Calu3 (cell line): ENCODE measurements at regions of chr18 and their contacts with region 1.

Region 1: GRCh38 chr18:62714671-62715435 is 488 bp upstream of the PHLPP1 start:
- DNase-seq: peak; percentile 99
- H3K4me3 Mint-ChIP-seq: peak overlapping the region; percentile 80
- H3K27ac Mint-ChIP-seq: peak overlapping the region; percentile 93
- H3K4me1 Mint-ChIP-seq: no peaks in the 10 kb centered on the region
- H3K27me3 Mint-ChIP-seq: no peaks in the 10 kb centered on the region
- CTCF ChIP-seq: peak; percentile 60

Region 2: DNA sequence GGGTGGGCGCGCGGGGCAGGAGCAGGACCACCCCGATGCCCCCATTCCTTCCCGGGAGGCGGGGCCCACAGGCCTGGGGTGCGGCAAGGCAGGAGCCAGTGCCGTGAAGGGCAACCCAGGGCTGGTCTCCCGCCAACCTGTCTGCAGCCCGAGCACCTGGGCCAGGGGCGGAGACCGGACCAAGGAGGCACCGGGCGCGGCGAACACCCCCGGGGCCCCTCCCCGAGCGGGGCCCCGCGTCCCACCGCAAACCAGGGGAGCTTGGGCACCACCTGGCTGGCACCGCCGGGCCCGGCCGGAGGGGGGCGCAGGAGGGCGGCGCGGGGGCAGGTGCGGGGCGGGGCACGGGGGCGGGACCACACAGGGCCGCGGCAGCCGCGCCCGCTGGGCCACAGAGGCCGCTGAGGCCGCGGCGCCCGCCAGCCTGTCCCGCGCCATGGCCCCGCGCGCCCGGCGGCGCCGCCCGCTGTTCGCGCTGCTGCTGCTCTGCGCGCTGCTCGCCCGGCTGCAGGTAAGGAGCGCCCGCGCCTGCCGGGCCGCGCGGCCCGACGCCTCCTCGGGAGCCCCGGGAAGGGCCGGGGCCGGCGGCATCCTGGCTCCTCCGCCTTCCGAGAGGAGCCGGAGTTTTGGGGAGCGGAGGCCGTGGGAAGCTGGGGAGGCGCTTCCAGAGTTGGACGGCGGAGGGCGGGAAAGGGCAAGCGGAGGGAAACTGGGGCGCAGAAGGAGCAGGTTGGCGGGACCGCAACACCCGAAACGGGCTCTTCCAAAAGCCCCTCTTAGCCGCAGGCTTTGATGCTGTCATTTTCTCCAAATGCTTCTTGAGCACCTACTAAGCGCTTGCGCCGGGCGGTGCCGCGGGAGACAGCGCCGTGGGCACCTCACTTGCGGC is 389.7 kb before region 1 on chr18 and contains the start of gene TNFRSF11A:
- CTCF ChIA-PET with region 1: interaction called, 4 read pairs
- intact Hi-C with region 1: loop called (anchors 5 kb)
- DNase-seq: peak; percentile 88
- H3K4me3 Mint-ChIP-seq: peak within 1 kb of the TSS; percentile 90
- H3K27ac Mint-ChIP-seq: peak within 1 kb of the TSS; percentile 79
- H3K4me1 Mint-ChIP-seq: peaks cover 62% of the 10 kb centered on the region
- H3K27me3 Mint-ChIP-seq: no peaks in the 10 kb centered on the region
- CTCF ChIP-seq: peak; percentile 54
- total RNA-seq, gene TNFRSF11A: 94.6 and 126 TPM in 2 replicates

Region 3: GRCh38 chr18:62651276-62652056 is 63.4 kb before region 1 on chr18:
- CTCF ChIA-PET with region 1: no interaction called
- intact Hi-C with region 1: no loop called
- DNase-seq: no peak
- H3K4me3 Mint-ChIP-seq: no peak overlapping the region
- H3K27ac Mint-ChIP-seq: no peak overlapping the region
- H3K4me1 Mint-ChIP-seq: no peaks in the 10 kb centered on the region
- H3K27me3 Mint-ChIP-seq: no peaks in the 10 kb centered on the region
- CTCF ChIP-seq: no peak

Region 4: GRCh38 chr18:62729487-62730386 is 14.9 kb after region 1 on chr18:
- CTCF ChIA-PET with region 1: no interaction called
- intact Hi-C with region 1: no loop called
- DNase-seq: no peak
- H3K4me3 Mint-ChIP-seq: no peak overlapping the region
- H3K27ac Mint-ChIP-seq: no peak overlapping the region
- H3K4me1 Mint-ChIP-seq: peaks cover 13% of the 10 kb centered on the region
- H3K27me3 Mint-ChIP-seq: no peaks in the 10 kb centered on the region
- CTCF ChIP-seq: no peak

Region 5: GRCh38 chr18:62757399-62758010 is 42.7 kb after region 1 on chr18:
- CTCF ChIA-PET with region 1: no interaction called
- intact Hi-C with region 1: loop called (anchors 2 kb)
- DNase-seq: peak; percentile 44
- H3K4me3 Mint-ChIP-seq: peak overlapping the region; percentile 23
- H3K27ac Mint-ChIP-seq: peak overlapping the region; percentile 9
- H3K4me1 Mint-ChIP-seq: peaks cover 62% of the 10 kb centered on the region
- H3K27me3 Mint-ChIP-seq: no peaks in the 10 kb centered on the region
- CTCF ChIP-seq: no peak

Region 6: DNA sequence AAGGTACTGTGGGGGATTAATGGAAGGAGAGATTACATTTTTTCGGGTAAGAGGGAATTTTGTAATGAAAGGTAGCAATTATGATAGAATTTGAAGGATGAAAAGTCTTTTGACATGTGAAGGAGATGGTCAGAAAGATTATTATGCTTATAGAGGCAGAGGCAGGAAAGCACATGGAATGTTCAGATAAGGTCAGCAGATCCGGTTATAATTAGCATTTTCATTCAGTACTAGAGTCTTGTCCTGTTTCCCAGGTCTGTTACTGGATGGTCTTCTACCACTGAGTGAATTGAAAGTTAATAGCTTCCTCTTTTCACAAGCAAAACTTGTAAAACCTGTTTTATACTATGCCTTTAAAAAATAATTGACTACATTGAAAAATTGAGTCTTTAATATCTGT is 117.4 kb after region 1 on chr18:
- CTCF ChIA-PET with region 1: interaction called, 3 read pairs
- intact Hi-C with region 1: loop called (anchors 5 kb)
- DNase-seq: no peak
- H3K4me3 Mint-ChIP-seq: peak overlapping the region; percentile 1
- H3K27ac Mint-ChIP-seq: peak overlapping the region; percentile 14
- H3K4me1 Mint-ChIP-seq: peaks cover 54% of the 10 kb centered on the region
- H3K27me3 Mint-ChIP-seq: no peaks in the 10 kb centered on the region
- CTCF ChIP-seq: no peak

Region 7: DNA sequence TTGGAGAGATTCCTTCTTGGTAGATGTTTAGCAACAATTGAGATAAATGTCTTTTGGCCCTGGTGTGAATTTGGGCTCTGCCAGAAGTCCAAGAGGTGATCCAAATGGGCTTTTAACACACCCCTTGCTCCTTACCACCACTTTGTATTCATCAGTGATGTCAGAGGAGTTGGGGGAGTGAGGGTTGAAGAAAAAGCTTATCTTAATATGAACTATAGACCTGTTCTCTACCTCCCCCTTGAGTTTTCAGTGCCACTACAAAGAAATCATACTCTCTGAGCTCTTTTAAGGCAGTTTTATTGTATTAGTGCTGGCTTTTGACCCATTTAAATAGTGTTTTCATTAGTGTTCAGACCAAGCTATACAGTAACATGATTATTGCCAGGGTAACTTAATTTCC is 229.6 kb after region 1 on chr18:
- CTCF ChIA-PET with region 1: interaction called, 9 read pairs
- intact Hi-C with region 1: loop called (anchors 5 kb)
- DNase-seq: no peak
- H3K4me3 Mint-ChIP-seq: no peak overlapping the region
- H3K27ac Mint-ChIP-seq: no peak overlapping the region
- H3K4me1 Mint-ChIP-seq: peaks cover 22% of the 10 kb centered on the region
- H3K27me3 Mint-ChIP-seq: no peaks in the 10 kb centered on the region
- CTCF ChIP-seq: no peak

Region 8: DNA sequence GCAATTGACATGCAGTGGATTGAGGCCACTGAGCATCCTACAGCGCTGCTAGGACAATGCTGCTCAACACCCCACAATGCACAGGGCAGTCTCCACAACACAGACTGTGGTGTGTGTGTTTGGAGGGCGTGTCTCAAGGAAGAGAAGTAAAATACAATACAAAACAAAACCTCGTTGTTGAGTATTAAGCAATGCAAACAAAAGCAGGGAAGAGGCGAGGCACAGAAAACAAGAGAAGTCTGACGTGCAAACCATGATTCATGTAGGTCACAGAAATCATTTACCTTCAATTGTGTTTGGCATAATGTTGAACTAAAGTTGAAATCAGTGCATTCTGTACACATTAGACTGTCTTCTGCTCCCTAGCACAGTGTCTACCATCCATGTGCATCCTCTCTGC is 261.4 kb after region 1 on chr18:
- CTCF ChIA-PET with region 1: interaction called, 4 read pairs
- intact Hi-C with region 1: loop called (anchors 2 kb)
- DNase-seq: peak; percentile 69
- H3K4me3 Mint-ChIP-seq: peak overlapping the region; percentile 18
- H3K27ac Mint-ChIP-seq: peak overlapping the region; percentile 37
- H3K4me1 Mint-ChIP-seq: peaks cover 45% of the 10 kb centered on the region
- H3K27me3 Mint-ChIP-seq: no peaks in the 10 kb centered on the region
- CTCF ChIP-seq: no peak